ENCODE measurements at regions of chrX and their contacts with region 1.

Region 1: DNA sequence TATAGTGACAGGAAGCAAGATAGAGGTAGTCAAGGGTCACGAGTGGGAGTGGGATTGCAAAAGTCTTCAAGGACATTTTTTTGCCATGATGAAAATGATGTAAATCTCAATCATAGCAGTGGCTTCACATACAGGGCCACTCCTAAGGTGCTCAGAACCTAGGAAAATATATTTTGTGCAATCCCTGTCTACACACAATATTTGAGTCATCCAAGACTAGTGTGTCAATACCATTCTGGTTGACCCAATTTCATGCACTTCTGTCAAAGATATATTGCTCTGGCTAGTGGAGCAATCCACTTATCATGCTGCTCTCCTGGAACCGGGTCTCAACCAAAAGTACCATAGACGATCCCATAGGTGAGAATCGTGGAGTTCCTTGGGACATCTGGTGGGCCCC is 24.2 kb upstream of the XPNPEP2 start:
- DNase-seq: no peak
- H3K4me3 ChIP-seq: no peak overlapping the region
- H3K27ac ChIP-seq: no peak overlapping the region
- H3K4me1 ChIP-seq: peaks cover 12% of the 10 kb centered on the region
- H3K27me3 ChIP-seq: no peaks in the 10 kb centered on the region
- CTCF ChIP-seq: no peak

Region 2: DNA sequence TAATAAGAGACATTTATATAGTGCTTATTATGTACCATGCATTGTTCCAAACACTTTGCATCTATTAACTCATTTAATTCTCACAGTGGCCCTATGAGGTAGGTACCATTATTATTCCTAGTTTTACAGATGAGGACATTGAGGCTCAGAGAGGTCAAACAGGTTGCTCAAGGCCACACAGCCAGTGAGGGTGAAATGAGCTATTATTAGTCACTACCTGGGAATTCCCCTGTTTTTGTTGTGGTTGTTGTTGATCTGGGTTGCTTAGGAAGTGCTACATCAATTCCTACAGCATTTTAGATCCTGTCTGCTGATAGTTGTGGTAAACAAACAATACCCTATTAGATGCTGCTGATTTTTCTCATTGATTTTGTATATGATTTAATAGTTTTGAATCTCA is 101.0 kb before region 1 on chrX:
- CTCF ChIA-PET with region 1: no interaction called
- dilution Hi-C with region 1: loop called (anchors 5 kb)
- in situ Hi-C with region 1: no loop called
- intact Hi-C with region 1: no loop called
- DNase-seq: peak; percentile 37
- H3K4me3 ChIP-seq: no peak overlapping the region
- H3K27ac ChIP-seq: no peak overlapping the region
- H3K4me1 ChIP-seq: peaks cover 3% of the 10 kb centered on the region
- H3K27me3 ChIP-seq: no peaks in the 10 kb centered on the region
- CTCF ChIP-seq: no peak

Region 3: DNA sequence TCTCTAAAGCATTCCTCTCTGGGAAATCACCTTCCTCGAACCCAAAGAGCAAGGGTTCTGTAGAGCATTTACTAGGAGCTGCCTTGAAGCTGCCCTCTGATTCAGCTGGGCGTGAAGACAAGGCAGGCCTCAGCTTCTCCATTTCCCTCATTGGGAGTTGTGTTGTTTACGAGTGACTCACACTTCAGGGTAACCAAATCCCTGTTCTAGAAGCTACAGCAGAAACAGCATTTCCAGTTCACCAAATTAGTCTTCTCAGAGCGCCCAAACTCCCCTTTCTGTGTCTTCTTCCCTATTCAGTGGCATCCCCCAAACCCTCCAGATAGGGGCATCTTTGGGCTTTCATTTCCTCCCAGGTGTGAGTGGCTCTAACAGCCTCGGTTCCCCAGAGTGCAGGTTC is 23.3 kb after region 1 on chrX:
- CTCF ChIA-PET with region 1: no interaction called
- dilution Hi-C with region 1: no loop called
- in situ Hi-C with region 1: no loop called
- intact Hi-C with region 1: no loop called
- DNase-seq: peak; percentile 55
- H3K4me3 ChIP-seq: no peak overlapping the region
- H3K27ac ChIP-seq: no peak overlapping the region
- H3K4me1 ChIP-seq: no peaks in the 10 kb centered on the region
- H3K27me3 ChIP-seq: no peaks in the 10 kb centered on the region
- CTCF ChIP-seq: no peak

Region 4: DNA sequence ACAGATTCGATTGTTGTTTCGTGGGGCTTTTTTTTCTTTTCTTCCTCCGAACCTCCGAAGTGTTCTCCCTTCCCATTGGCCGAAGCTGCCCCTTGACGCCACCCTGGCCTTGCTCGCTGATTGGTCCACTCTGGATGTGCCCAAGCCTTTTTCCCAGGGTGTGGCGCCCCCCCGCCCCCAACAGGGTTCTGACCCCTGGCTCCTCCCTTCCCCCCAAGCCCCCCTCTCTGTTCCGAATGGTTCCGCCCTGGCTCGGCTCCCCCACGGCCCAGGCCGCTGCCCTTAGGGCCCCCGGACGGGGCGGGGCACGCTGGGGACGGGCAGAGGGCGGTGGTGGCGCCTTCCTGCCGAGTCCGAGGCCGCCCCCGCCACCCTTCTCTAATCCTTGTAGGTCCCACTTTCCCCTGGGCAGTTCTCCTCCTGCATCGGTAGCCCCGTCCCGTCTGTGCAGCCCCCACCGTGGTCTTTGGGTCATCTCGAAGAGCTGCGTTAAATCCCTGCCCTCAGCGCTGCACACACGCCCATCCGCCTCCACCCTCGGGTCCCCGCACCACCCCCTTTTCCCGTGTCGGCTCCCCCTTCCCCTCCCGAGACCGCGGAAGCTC is 216.9 kb after region 1 on chrX:
- CTCF ChIA-PET with region 1: no interaction called
- dilution Hi-C with region 1: no loop called
- in situ Hi-C with region 1: no loop called
- intact Hi-C with region 1: no loop called
- DNase-seq: peak; percentile 61
- H3K4me3 ChIP-seq: peak overlapping the region; percentile 21 to 64 (median 51)
- H3K27ac ChIP-seq: no peak overlapping the region
- H3K4me1 ChIP-seq: no peaks in the 10 kb centered on the region
- H3K27me3 ChIP-seq: no peaks in the 10 kb centered on the region
- CTCF ChIP-seq: no peak

Measured in mammary epithelial cell (primary cell).